Activated naive CD4-positive, alpha-beta T cell treated with anti-CD3 and anti-CD28 coated beads for 36 hours (primary cell): ENCODE measurements at regions of chrX and their contacts with region 1.

Region 1: DNA sequence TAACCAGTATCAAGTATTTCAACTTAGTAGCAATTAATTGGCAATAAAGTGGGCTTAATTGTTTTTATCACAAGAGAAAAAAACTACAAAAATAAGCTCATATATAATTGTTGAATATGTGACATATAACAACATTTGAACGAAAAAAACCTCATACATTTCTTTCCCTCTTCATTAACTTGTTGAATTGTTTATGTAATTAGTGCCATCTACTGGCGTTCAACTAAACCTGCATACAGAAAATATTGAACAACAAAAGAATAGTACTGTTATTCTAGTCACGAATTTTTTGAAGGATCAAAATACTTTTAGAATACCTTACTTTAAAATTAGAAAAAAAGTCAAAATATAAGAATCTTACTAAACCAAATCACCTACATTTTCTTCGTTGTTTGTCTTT is 586.5 kb upstream of the FTHL17 start:
- DNase-seq: no peak
- H3K4me3 Mint-ChIP-seq: no peak overlapping the region
- H3K27ac Mint-ChIP-seq: no peak overlapping the region
- H3K4me1 Mint-ChIP-seq: no peaks in the 10 kb centered on the region
- H3K27me3 Mint-ChIP-seq: no peaks in the 10 kb centered on the region

Region 2: DNA sequence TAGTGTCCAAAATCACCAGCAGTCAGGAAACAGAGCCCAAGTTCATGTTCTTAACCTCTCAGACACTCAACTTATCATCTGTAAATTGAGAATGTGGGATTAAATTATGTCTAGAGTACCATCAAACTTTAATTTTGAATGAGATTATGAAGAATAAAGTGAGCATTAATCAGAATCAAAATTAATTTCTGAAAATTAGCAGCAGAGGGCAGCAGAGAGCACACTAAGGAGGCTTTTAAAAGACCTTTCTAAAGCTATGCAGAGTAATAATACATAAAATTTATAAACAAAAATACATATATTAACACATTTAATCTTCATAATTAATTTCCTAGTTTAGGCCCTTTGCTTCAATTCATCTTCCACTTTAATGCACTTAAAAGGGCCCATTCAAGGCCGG is 1087.9 kb before region 1 on chrX:
- CTCF ChIA-PET with region 1: no interaction called
- intact Hi-C with region 1: loop called (anchors 10 kb)
- DNase-seq: no peak
- H3K4me3 Mint-ChIP-seq: no peak overlapping the region
- H3K27ac Mint-ChIP-seq: no peak overlapping the region
- H3K4me1 Mint-ChIP-seq: peaks cover 19% of the 10 kb centered on the region
- H3K27me3 Mint-ChIP-seq: no peaks in the 10 kb centered on the region

Region 3: GRCh38 chrX:31213941-31214340 is 444.4 kb before region 1 on chrX:
- CTCF ChIA-PET with region 1: interaction called, 3 read pairs
- intact Hi-C with region 1: loop called (anchors 5 kb)
- DNase-seq: peak; percentile 21
- H3K4me3 Mint-ChIP-seq: no peak overlapping the region
- H3K27ac Mint-ChIP-seq: no peak overlapping the region
- H3K4me1 Mint-ChIP-seq: no peaks in the 10 kb centered on the region
- H3K27me3 Mint-ChIP-seq: no peaks in the 10 kb centered on the region

Region 4: GRCh38 chrX:31445542-31445941 is 212.8 kb before region 1 on chrX:
- CTCF ChIA-PET with region 1: interaction called, 10 read pairs
- intact Hi-C with region 1: no loop called
- DNase-seq: no peak
- H3K4me3 Mint-ChIP-seq: no peak overlapping the region
- H3K27ac Mint-ChIP-seq: no peak overlapping the region
- H3K4me1 Mint-ChIP-seq: no peaks in the 10 kb centered on the region
- H3K27me3 Mint-ChIP-seq: no peaks in the 10 kb centered on the region